ENCODE measurements at regions of chr5 and their contacts with region 1.

Region 1: DNA sequence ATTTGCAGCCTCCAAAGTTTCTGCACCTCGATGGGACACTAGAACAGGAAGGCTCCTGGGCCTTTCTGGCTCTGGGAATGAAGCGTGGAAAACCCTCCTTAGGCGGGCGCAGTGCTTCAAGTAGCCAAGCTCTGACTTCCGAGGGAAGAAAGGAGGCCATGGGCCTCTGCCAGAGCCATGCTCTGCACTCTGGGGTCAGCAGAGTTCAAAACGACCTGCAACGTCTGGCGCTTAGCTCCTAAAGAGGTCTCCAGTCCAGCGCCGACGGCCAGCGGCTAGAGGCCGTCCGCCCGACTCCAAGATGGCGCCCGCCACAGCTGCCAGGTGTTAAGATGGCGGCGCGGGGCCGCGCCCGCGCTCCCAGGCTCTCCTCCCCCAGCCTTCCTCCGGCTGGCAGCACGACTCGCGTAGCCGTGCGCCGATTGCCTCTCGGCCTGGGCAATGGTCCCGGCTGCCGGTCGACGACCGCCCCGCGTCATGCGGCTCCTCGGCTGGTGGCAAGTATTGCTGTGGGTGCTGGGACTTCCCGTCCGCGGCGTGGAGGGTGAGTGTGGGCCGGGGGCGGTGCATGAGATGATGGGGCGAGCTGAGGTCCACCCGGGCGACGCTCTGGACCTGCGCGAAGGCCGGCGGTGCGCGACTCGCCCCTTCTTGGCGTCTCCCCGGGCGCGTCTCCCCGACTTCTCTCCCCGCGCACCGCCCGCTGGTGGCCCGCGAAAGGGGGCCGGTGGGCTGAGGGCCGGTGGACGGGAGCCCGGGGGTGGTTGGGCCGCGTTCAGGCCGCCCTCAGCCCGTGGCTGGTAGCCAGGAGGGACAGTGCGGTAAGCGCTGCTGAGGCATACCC is at the start of gene TXNDC15:
- DNase-seq: peak; percentile 62 to 80
- H3K4me3 ChIP-seq: peak within 1 kb of the TSS; percentile 85
- H3K27ac ChIP-seq: peak within 1 kb of the TSS; percentile 42
- H3K4me1 ChIP-seq: 0 out of 2 replicates have a peak, but pooled peaks cover 8% of the 10 kb centered on the region
- H3K27me3 ChIP-seq: no peaks in the 10 kb centered on the region
- CTCF ChIP-seq: no peak
- total RNA-seq, gene TXNDC15: 18.0 and 19.5 TPM in 2 replicates

Region 2: GRCh38 chr5:135191084-135191826 is 317.0 kb after region 1 on chr5:
- CTCF ChIA-PET with region 1: no interaction called
- POLR2A ChIA-PET with region 1: no interaction called
- intact Hi-C with region 1: loop called (anchors 1 kb)
- DNase-seq: peak; percentile 70 to 86
- H3K4me3 ChIP-seq: peak overlapping the region; percentile 59
- H3K27ac ChIP-seq: no peak overlapping the region
- H3K4me1 ChIP-seq: peaks cover 24% of the 10 kb centered on the region
- H3K27me3 ChIP-seq: no peaks in the 10 kb centered on the region
- CTCF ChIP-seq: peak; percentile 94